ENCODE measurements at regions of chr6 and their contacts with region 1.

Region 1: GRCh38 chr6:156953479-156954146 is 176.4 kb downstream of the ARID1B start:
- DNase-seq: peak; percentile 96
- H3K4me3 ChIP-seq: peak overlapping the region in 1 of 3 experiments; percentile 20
- H3K27ac ChIP-seq: peak overlapping the region; percentile 97
- H3K4me1 ChIP-seq: peaks cover 48% of the 10 kb centered on the region
- H3K27me3 ChIP-seq: no peaks in the 10 kb centered on the region
- CTCF ChIP-seq: peak; percentile 5 to 42

Region 2: DNA sequence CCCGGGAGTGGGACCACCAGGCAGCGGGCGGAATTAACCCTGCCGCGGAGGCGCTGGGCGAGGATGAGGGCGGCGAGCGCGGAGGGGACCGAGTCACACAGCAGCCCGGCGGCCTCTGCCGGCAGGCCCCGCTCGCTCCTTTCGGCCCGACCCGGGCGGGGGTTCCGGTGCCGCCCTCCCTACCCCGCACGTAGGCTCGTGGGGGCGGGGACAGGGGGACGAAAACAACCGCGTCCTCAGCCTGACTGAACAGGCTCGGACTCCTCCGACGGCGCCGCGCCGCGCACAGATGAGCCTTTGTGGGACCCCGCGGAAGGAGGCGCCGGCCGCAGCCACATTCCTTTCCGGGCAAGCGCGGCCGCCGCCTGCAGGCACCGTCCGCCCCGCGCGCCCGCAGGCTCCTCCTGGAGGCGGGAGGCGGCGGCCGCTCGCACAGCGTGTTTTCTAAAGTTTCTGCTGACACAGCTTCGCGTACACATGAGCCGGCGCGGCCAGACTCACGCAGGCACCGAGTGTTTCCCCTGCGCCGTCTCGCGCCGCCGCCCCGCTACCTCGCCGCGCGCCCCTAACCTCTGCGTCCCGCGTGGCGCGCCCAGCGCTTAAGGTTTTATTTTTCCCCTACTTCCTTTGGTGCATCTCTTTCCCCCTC is 67.9 kb after region 1 on chr6:
- CTCF ChIA-PET with region 1: no interaction called
- dilution Hi-C with region 1: no loop called
- in situ Hi-C with region 1: no loop called
- intact Hi-C with region 1: loop called (anchors 2 kb)
- DNase-seq: peak; percentile 84
- H3K4me3 ChIP-seq: peak overlapping the region; percentile 72 to 87 (median 85)
- H3K27ac ChIP-seq: peak overlapping the region; percentile 97
- H3K4me1 ChIP-seq: peaks cover 17% of the 10 kb centered on the region
- H3K27me3 ChIP-seq: no peaks in the 10 kb centered on the region
- CTCF ChIP-seq: peak in 1 of 2 donors; percentile 36

Region 3: DNA sequence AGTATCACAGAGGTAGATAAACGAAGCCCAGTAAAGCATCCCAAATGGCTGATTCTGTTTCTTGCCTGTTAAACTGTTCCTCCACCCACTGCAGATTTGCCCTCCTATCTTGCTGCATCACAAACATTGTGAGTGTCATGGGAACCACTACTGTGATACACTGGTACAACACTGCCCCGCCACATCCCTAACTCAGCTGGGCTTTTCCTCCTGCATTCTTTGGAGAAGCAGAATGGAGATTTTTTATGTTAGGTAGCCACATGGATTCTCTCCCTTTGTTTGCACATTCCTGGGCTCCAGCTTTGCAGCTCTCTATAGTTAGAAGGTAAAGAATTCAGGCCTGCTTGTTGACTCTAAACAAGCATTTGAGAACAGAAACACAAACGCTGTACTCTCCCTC is 135.6 kb after region 1 on chr6:
- CTCF ChIA-PET with region 1: no interaction called
- dilution Hi-C with region 1: no loop called
- in situ Hi-C with region 1: no loop called
- intact Hi-C with region 1: no loop called
- DNase-seq: no peak
- H3K4me3 ChIP-seq: no peak overlapping the region
- H3K27ac ChIP-seq: no peak overlapping the region
- H3K4me1 ChIP-seq: no peaks in the 10 kb centered on the region
- H3K27me3 ChIP-seq: no peaks in the 10 kb centered on the region
- CTCF ChIP-seq: no peak